T-cell (primary cell): ENCODE measurements at regions of chr2 and their contacts with region 1.

Region 1: GRCh38 chr2:20411361-20411894 is 35.4 kb upstream of the RHOB start:
- DNase-seq: peak; percentile 38 to 74 (median 61)
- ATAC-seq: peak; percentile 82 to 94 (median 88)
- H3K4me3 ChIP-seq: no peak overlapping the region
- H3K4me3 Mint-ChIP-seq: no peak overlapping the region
- H3K27ac ChIP-seq: no peak overlapping the region
- H3K27ac Mint-ChIP-seq: no peak overlapping the region
- H3K4me1 ChIP-seq: no peaks in the 10 kb centered on the region
- H3K4me1 Mint-ChIP-seq: no peaks in the 10 kb centered on the region
- H3K27me3 ChIP-seq: peaks cover 0 to 24% of the 10 kb centered on the region in 2 experiments
- H3K27me3 Mint-ChIP-seq: peaks cover 5 to 7% of the 10 kb centered on the region in 2 donors

Region 2: GRCh38 chr2:20225294-20226151 is 185.9 kb before region 1 on chr2:
- CTCF ChIA-PET with region 1: no interaction called
- POLR2A ChIA-PET with region 1: no interaction called
- DNase-seq: peak in 8 of 35 experiments; percentile 4 to 21 (median 12)
- ATAC-seq: peak; percentile 39 to 55 (median 48)
- H3K4me3 ChIP-seq: peak overlapping the region in 1 of 2 donors; percentile 19
- H3K4me3 Mint-ChIP-seq: peak overlapping the region; percentile 41 to 66 (median 51)
- H3K27ac ChIP-seq: no peak overlapping the region
- H3K27ac Mint-ChIP-seq: no peak overlapping the region
- H3K4me1 ChIP-seq: peaks cover 0 to 21% of the 10 kb centered on the region in 2 experiments
- H3K4me1 Mint-ChIP-seq: peaks cover 0 to 12% (median 10%) of the 10 kb centered on the region in 3 donors
- H3K27me3 ChIP-seq: peaks cover 9 to 57% of the 10 kb centered on the region in 2 experiments
- H3K27me3 Mint-ChIP-seq: peaks cover 42 to 64% of the 10 kb centered on the region in 2 donors

Region 3: GRCh38 chr2:20264629-20265028 is 146.8 kb before region 1 on chr2:
- CTCF ChIA-PET with region 1: no interaction called
- POLR2A ChIA-PET with region 1: no interaction called
- DNase-seq: no peak
- ATAC-seq: no peak
- H3K4me3 ChIP-seq: no peak overlapping the region
- H3K4me3 Mint-ChIP-seq: no peak overlapping the region
- H3K27ac ChIP-seq: no peak overlapping the region
- H3K27ac Mint-ChIP-seq: peak overlapping the region in 1 of 2 donors; percentile 48
- H3K4me1 ChIP-seq: no peaks in the 10 kb centered on the region
- H3K4me1 Mint-ChIP-seq: peaks cover 0 to 10% (median 6%) of the 10 kb centered on the region in 3 donors
- H3K27me3 ChIP-seq: no peaks in the 10 kb centered on the region
- H3K27me3 Mint-ChIP-seq: no peaks in the 10 kb centered on the region

Region 4: DNA sequence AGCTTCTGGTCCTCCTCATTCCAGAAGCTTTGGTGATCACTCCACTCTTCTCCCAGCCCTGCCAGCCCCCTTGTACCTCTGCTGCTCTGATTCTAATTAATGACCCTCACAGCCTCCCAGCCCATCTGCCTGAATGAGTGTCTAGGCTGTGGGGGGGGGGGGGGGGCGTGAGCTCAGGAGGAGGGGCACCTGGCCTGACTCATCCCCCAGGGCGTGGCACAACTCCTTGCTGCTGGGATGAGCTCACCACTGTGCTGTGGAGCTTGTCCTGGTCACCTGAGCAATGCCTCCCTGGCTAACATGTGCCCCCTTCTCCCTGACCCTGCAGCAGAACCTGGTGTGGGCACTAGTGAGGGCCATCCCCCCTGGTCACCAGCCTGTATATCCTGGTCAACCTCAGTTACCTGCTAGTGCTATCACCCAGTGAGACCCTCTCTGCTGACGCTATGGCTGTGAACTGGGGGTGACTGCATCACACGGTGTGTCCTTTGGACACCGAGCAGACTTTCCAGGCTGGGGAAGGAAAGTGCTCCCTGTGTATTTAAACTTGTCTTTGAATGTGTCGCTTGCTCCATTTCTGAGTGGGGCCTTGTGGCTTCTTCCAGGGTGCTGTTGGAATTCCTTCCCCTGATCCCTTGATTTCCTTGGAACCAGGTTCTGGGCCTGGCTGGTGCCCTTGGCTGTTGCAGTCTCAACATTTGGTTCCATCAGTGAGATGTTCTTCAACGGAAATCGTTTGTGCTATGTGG is 19.3 kb before region 1 on chr2:
- CTCF ChIA-PET with region 1: no interaction called
- POLR2A ChIA-PET with region 1: no interaction called
- DNase-seq: no peak
- ATAC-seq: no peak
- H3K4me3 ChIP-seq: no peak overlapping the region
- H3K4me3 Mint-ChIP-seq: no peak overlapping the region
- H3K27ac ChIP-seq: no peak overlapping the region
- H3K27ac Mint-ChIP-seq: no peak overlapping the region
- H3K4me1 ChIP-seq: no peaks in the 10 kb centered on the region
- H3K4me1 Mint-ChIP-seq: no peaks in the 10 kb centered on the region
- H3K27me3 ChIP-seq: peaks cover 0 to 23% of the 10 kb centered on the region in 2 experiments
- H3K27me3 Mint-ChIP-seq: peaks cover 7 to 17% of the 10 kb centered on the region in 2 donors

Region 5: GRCh38 chr2:20483194-20483895 is 71.9 kb after region 1 on chr2:
- CTCF ChIA-PET with region 1: interaction called in 1 of 2 experiments, 10 read pairs
- POLR2A ChIA-PET with region 1: no interaction called
- DNase-seq: no peak
- ATAC-seq: no peak
- H3K4me3 ChIP-seq: no peak overlapping the region
- H3K4me3 Mint-ChIP-seq: no peak overlapping the region
- H3K27ac ChIP-seq: no peak overlapping the region
- H3K27ac Mint-ChIP-seq: no peak overlapping the region
- H3K4me1 ChIP-seq: no peaks in the 10 kb centered on the region
- H3K4me1 Mint-ChIP-seq: no peaks in the 10 kb centered on the region
- H3K27me3 ChIP-seq: peaks cover 0 to 17% of the 10 kb centered on the region in 2 experiments
- H3K27me3 Mint-ChIP-seq: peaks cover 0 to 2% of the 10 kb centered on the region in 2 donors

Region 6: DNA sequence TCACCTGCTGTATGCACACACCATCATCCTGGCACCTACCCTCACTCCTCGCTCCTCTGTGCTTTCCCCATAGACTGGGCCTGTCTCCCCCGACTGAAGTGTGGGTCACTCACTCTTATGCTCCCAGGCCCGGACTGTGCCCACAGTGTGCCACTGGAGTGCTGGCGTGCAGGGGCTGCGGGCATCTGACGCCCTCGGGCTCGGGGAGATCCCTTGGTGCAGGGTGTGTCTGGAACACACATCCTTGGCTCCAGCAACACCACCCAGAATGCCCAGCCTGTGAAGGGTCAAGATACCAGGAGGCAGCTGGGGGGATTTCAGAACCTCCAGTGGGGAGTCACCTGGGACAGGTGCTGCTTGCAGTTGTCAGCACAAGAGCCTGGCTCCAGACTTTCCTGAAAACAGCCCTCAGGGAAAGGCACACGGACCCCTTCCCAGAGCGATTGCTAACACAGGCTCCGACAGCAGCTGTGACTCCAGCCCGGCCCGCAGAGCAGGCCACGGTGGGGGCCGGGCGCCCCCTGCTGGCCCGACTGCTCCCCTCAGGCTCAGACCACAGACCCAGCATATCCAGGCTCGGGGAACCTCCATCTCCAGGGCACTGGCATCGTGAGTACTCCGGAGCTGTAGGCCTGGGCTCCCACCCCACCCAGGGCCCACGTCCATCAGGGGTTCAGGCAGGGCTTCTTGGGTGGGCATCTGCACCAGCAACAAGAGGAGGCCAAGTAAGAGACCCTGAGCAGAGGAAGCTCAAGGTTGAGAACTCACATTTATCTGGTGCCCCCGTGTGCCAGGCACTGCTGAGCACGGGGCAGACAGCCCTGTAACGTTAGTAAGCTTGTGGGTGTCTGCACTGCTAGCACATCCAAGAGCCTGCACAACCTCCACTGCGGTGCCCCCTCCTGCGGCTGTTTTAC is 230.9 kb after region 1 on chr2:
- CTCF ChIA-PET with region 1: interaction called, 19 to 27 read pairs
- POLR2A ChIA-PET with region 1: no interaction called
- DNase-seq: peak; percentile 37 to 84 (median 64)
- ATAC-seq: peak; percentile 87 to 99 (median 90)
- H3K4me3 ChIP-seq: no peak overlapping the region
- H3K4me3 Mint-ChIP-seq: no peak overlapping the region
- H3K27ac ChIP-seq: no peak overlapping the region
- H3K27ac Mint-ChIP-seq: no peak overlapping the region
- H3K4me1 ChIP-seq: peaks cover 0 to 8% of the 10 kb centered on the region in 2 experiments
- H3K4me1 Mint-ChIP-seq: peaks cover 6 to 11% (median 10%) of the 10 kb centered on the region in 3 donors
- H3K27me3 ChIP-seq: no peaks in the 10 kb centered on the region
- H3K27me3 Mint-ChIP-seq: no peaks in the 10 kb centered on the region